Dorsolateral prefrontal cortex (tissue), 120 donors: ENCODE measurements at regions of chr12 and their contacts with region 1.

Region 1: DNA sequence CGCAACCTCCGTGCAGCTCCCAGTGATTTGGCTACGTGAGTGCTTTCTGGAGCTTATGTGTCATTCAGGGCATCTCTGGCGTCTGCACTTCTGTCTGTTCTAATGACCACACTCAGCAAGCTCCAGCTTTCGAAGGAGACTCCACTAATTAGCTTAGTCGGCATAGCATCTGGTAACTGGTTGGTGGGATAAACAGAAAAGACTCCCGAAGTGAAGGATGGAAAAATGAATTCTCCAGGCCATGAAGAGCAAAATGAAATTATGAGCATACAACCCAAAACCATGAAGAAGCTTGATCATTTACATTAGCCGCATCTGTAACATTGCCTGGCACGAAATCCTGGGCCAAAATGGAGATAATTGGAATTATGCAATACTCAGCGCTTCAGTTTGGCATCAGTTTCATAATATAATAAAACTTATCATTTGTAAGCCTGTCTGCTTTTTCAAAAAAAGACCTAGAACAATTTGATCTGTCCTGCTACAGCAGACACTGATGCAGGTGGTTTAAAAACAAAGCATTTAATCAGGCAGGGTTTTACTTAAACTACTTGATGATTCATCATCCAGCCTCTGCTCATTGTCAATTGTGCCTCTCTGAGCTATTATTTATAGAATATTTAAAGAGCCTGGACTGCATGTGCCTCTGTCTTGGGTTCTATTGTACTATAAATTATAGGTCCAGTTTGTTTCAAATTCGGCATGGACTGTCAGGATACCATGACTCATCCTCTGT is 87.4 kb downstream of the SYT1 start:
- DNase-seq: peak in 1 of 10 donors; percentile 60
- H3K4me3 ChIP-seq: no peak overlapping the region
- H3K27ac ChIP-seq: peak overlapping the region in 19 of 59 donors; percentile 6 to 64 (median 36)
- H3K27me3 ChIP-seq: no peaks in the 10 kb centered on the region
- CTCF ChIP-seq: no peak

Region 2: GRCh38 chr12:78916845-78917480 is 35.0 kb before region 1 on chr12:
- intact Hi-C with region 1: loop called in 1 of 2 experiments (anchors 2 kb)
- DNase-seq: no peak
- H3K4me3 ChIP-seq: no peak overlapping the region
- H3K27ac ChIP-seq: no peak overlapping the region
- H3K27me3 ChIP-seq: no peaks in the 10 kb centered on the region
- CTCF ChIP-seq: no peak